ENCODE measurements at regions of chr17 and their contacts with region 1.

Region 1: DNA sequence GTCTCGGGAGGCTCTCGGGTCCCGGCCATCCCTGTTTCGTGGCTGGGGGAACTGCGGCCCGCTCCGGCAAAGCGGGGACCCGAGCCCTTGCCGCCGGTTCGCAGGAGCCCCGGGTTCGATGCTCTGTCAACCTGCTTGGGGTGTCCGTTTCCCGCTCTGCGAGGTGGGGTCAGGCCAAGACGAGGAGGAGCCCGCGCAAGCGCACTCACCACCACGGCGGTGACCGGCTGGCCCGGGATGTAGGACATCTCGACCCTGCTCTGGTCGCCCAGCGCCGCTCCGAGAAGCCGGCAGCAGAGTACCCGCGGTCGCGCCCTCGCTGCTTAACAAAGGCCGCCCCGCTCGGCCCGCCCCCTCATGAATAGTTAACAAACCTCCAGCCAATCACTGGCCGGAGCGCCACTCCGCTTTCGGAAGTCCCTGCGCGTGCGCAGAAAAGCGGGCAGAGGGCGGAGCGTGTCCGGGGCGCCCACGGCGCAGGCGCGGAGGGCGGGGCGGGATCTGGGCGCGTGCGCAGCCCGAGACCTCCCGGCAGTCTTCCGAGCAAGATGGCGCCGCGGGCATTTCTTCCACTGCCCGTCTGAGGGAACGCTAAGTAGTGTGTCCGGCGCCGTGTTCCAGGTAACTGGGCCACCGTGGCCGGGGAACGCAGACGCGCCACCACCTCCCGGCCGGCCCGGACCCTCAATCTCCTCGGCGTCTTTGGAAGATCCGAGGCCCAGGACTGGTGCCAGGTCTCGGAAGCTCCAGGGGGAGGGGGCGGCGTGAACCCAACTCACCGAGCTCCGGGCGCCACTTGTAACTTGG is at the starts of genes EMC6 and TAX1BP3:
- DNase-seq: peak; percentile 99
- ATAC-seq: peak; percentile 87 to 93
- H3K4me3 ChIP-seq: peak within 1 kb of the TSS; percentile 82
- H3K27ac ChIP-seq: peak within 1 kb of the TSS; percentile 94
- H3K4me1 ChIP-seq: peaks cover 25% of the 10 kb centered on the region
- CTCF ChIP-seq: no peak
- EP300 ChIP-seq: no peak
- POLR2A ChIP-seq: peak; percentile 98
- RAD21 ChIP-seq: no peak
- polyA plus RNA-seq, gene EMC6: 53.3 and 68.3 TPM in 2 replicates
- polyA plus RNA-seq, gene TAX1BP3: 89.1 and 122 TPM in 2 replicates

Region 2: DNA sequence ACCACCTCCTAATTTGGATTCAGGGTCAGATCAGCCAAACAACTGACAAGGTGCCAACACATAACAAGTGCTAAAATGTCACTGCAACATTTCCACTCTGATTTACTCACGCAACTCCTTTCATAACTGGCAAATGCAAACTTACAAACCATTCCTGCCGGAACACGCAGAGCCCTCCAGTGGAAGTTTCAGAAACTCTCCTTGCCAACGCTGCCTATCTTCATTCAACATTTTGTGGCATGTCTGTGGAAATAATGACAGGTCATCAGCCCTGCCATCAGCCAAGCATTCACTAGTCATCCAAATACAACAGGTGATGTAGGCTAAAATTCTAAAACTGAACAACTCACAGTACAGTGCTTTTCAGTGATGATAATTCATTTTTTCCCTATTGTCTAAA is 332.6 kb before region 1 on chr17:
- CTCF ChIA-PET with region 1: no interaction called
- POLR2A ChIA-PET with region 1: no interaction called
- DNase-seq: peak in 1 of 2 experiments; percentile 43
- ATAC-seq: peak; percentile 54 to 55; a peak in 2 of 6 replicates
- H3K4me3 ChIP-seq: no peak overlapping the region
- H3K27ac ChIP-seq: no peak overlapping the region
- H3K4me1 ChIP-seq: no peaks in the 10 kb centered on the region
- CTCF ChIP-seq: peak; percentile 14; the same call in 1 of the 3 replicates
- EP300 ChIP-seq: no peak
- POLR2A ChIP-seq: no peak
- RAD21 ChIP-seq: peak in 1 of 2 experiments; percentile 38; a peak in 3 of 5 replicates

Region 3: DNA sequence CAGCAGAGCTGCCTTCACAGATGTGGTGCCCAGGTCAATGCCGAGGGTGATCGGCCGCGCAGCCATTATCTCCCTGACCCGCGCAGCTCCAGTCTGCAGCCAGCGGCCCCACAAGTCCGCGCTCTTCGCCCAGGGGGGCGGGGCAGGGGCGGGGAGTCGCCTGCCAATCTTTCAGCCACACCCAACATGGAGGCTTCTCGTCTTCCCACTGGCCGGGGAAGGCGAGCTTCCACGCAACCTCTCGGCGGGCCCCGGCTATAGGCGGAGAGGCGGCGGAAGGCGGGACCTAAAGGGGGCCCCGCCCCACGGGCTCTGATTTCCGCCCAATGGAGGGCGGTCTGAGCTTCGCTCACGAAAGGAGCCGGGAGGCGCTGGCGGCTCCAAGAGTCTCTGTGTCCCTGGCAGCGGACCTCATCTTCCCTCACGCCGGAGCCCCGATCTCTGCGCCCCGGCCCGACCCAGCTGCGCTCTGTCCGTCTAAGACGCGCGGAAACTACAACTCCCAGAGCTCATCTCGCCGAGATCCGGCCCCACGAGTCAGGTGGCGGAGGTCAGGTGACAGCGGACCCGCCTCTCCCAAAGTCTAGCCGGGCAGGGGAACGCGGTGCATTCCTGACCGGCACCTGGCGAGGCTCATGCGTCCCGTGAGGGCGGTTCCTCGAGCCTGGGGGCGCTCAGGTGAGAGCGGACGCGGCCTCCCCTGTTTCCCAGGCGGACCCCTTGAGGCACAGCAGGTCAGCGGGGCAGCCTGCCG is 32.2 kb before region 1 on chr17 and contains the starts of genes CTNS and SHPK:
- CTCF ChIA-PET with region 1: interaction called, 6 read pairs
- POLR2A ChIA-PET with region 1: interaction called, 24 read pairs
- DNase-seq: peak; percentile 97 to 99
- ATAC-seq: peak; percentile 94 to 97
- H3K4me3 ChIP-seq: peak within 1 kb of the TSS; percentile 93
- H3K27ac ChIP-seq: peak within 1 kb of the TSS; percentile 90 to 97
- H3K4me1 ChIP-seq: peaks cover 14% of the 10 kb centered on the region
- CTCF ChIP-seq: no peak
- EP300 ChIP-seq: no peak
- POLR2A ChIP-seq: peak; percentile 93
- RAD21 ChIP-seq: no peak
- polyA plus RNA-seq, gene CTNS: 6.5 and 7.4 TPM in 2 replicates
- polyA plus RNA-seq, gene SHPK: 10.7 and 13.4 TPM in 2 replicates

Region 4: DNA sequence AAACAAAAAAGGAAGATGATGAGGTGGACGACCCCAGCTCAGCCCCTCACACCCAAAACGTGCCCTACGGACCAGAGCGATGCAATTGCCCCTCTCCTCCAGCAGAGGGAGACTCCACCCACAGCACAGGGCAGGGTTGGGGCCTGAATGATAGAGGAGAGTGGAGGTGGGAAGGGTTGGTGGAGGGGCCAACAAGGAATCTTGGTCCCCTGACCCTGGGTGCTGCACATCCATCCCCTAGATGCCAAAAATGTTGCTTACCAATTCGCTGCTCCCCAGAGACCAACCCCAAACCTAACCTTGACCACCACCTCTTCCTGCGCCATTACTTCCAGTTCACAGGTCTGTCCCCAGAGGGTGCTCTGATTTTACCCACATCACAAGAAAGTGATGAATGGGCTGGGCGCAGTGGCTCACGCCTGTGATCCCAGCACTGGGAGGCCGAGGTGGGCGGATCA is 14.6 kb after region 1 on chr17:
- CTCF ChIA-PET with region 1: interaction called, 19 read pairs
- POLR2A ChIA-PET with region 1: interaction called, 8 read pairs
- DNase-seq: peak; percentile 63 to 93
- ATAC-seq: peak; percentile 49 to 88; a peak in 5 of 6 replicates
- H3K4me3 ChIP-seq: no peak overlapping the region
- H3K27ac ChIP-seq: no peak overlapping the region
- H3K4me1 ChIP-seq: no peaks in the 10 kb centered on the region
- CTCF ChIP-seq: peak; percentile 85
- EP300 ChIP-seq: no peak
- POLR2A ChIP-seq: no peak
- RAD21 ChIP-seq: peak; percentile 61 to 73

Region 5: GRCh38 chr17:3695723-3696411 is 27.4 kb after region 1 on chr17 and contains the start of gene P2RX5:
- CTCF ChIA-PET with region 1: interaction called, 6 read pairs
- POLR2A ChIA-PET with region 1: interaction called, 10 read pairs
- DNase-seq: no peak
- ATAC-seq: peak; percentile 69 to 74
- H3K4me3 ChIP-seq: peak within 1 kb of the TSS; percentile 57
- H3K27ac ChIP-seq: peak within 1 kb of the TSS; percentile 73 to 89
- H3K4me1 ChIP-seq: peaks cover 8% of the 10 kb centered on the region; the same call in 2 of the 3 replicates
- CTCF ChIP-seq: no peak
- EP300 ChIP-seq: no peak
- POLR2A ChIP-seq: no peak
- RAD21 ChIP-seq: no peak
- polyA plus RNA-seq, gene P2RX5: 7.8 and 12.2 TPM in 2 replicates

Region 6: GRCh38 chr17:3723556-3724369 is 55.3 kb after region 1 on chr17 and contains the start of gene HASPIN:
- CTCF ChIA-PET with region 1: no interaction called
- POLR2A ChIA-PET with region 1: interaction called, 17 read pairs
- DNase-seq: peak; percentile 94 to 97
- ATAC-seq: peak; percentile 94 to 95
- H3K4me3 ChIP-seq: peak within 1 kb of the TSS; percentile 60
- H3K27ac ChIP-seq: peak within 1 kb of the TSS; percentile 88 to 89
- H3K4me1 ChIP-seq: peaks cover 42% of the 10 kb centered on the region
- CTCF ChIP-seq: no peak
- EP300 ChIP-seq: no peak; a peak in 1 of 5 replicates
- POLR2A ChIP-seq: peak; percentile 93
- RAD21 ChIP-seq: no peak; a peak in 1 of 5 replicates
- polyA plus RNA-seq, gene HASPIN: 8.7 and 10.0 TPM in 2 replicates

Region 7: DNA sequence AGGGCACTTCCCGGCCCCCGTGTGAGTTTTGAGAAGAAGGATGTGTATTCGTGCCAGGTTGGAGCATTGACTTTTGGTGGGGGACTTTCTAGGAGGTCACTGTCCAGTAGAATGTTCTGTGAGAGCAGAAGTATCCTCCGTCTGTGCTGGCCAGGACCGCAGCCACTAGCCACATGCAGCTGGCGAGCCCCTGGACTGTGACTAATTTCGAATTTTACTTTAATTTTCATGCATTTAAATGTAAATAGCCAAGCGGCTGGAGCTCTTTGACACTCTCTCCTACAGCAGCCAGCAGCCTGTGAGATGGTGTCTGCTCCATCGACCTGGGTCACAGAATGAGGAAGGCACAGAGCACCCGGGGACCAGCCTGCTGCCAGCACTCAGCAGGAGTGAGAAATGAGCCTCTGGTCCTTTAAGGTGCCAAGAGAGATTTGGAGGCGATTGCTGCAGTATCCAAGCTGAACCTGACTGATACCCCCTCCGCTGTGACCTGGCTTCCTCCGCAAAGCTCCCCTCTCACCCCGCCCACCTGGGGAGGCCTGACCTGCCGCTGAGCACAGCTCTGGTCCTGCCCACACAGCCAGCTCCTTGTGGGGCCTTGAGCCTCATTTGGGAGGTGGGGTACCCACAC is 288.0 kb after region 1 on chr17:
- CTCF ChIA-PET with region 1: no interaction called
- POLR2A ChIA-PET with region 1: no interaction called
- DNase-seq: no peak
- ATAC-seq: no peak
- H3K4me3 ChIP-seq: no peak overlapping the region
- H3K27ac ChIP-seq: no peak overlapping the region
- H3K4me1 ChIP-seq: peaks cover 27% of the 10 kb centered on the region
- CTCF ChIP-seq: no peak
- EP300 ChIP-seq: no peak
- POLR2A ChIP-seq: no peak
- RAD21 ChIP-seq: no peak

Measured in A549 (cell line).